Activated naive CD8-positive, alpha-beta T cell treated with anti-CD3 and anti-CD28 coated beads, Interleukin-2, amount 10 ng/mL, durations not matched to agents 7 days and 5 days (primary cell): ENCODE measurements at regions of chr1 and their contacts with region 1.

Region 1: GRCh38 chr1:161132410-161133219 is at the start of gene DEDD:
- DNase-seq: peak; percentile 92
- ATAC-seq: peak; percentile 98
- H3K4me3 Mint-ChIP-seq: no peak within 1 kb of the TSS
- H3K27ac Mint-ChIP-seq: no peak within 1 kb of the TSS
- H3K4me1 Mint-ChIP-seq: peaks cover 35% of the 10 kb centered on the region
- H3K27me3 Mint-ChIP-seq: no peaks in the 10 kb centered on the region
- total RNA-seq, gene DEDD: 39.8 to 40.3 TPM

Region 2: DNA sequence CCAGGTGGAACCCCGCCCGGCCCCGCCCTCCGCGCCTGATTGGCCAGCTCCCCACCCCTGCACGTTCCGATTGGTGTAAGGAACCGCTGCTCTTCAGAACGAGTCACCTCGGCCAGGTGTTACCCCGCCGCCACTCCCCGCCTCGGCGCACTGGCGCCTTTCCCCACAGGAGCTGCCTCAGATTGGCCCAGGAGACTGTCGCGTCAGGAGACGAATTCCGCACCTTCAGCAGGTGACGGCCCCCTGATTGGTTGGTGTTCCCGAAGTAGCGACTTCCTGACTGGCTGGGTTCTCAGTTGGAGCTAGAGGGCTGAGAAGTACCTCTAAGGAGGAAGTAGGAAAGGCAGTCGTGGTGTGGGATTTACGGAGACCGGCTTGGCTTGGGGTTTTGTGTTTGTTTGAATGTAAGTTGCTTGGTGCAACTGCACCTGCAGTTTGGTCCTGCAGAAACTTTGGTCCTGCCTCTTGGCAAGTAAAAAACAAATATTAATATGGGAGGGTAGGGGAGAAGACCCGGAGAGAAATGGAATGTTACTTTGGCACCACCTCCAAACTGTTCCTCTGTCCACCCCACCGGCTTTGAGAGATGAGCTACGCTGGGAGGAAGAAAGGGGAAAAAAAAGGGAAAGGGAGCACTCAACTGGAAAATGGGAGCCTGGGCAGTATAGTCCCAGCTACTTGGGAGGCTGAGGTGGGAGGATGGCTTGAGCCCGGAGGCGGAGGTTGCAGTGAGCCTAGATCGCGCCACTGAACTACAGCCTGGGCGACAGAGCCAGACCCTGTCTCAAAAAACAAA is 111.3 kb before region 1 on chr1:
- POLR2A ChIA-PET with region 1: interaction called, 10 read pairs
- DNase-seq: peak; percentile 84
- ATAC-seq: peak; percentile 95
- H3K4me3 Mint-ChIP-seq: peak overlapping the region; percentile 97
- H3K27ac Mint-ChIP-seq: peak overlapping the region; percentile 79
- H3K4me1 Mint-ChIP-seq: peaks cover 29% of the 10 kb centered on the region
- H3K27me3 Mint-ChIP-seq: no peaks in the 10 kb centered on the region

Region 3: DNA sequence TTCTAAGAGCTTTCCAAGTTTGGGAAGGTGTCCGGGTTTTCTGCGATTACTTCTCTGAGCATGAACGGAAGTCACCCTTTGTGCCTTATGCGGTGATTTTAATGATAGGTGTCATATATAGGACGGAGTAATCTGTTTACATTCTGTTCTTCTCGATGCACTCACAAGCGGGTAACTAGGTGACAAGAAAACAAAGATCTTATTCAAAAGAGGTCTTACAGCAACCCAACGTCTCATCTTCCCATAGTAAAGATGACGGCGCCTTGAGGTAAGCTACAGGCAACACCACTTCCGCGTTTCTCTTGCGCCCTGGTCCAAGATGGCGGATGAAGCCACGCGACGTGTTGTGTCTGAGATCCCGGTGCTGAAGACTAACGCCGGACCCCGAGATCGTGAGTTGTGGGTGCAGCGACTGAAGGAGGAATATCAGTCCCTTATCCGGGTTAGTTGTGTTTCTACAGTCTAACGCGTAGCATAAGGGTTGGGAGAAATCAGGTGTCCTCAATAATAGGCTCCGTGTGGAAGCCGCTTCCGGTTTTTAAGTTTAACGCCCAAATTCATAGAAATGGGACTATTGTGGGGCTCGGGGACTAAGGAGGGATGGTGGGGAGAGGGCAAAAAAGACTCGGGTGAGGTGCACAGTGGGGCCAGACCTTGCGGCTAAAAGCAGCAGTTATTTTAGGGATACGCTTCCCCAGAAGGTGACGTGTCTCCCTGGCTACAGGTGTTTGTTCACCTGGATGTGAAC is 21.2 kb after region 1 on chr1 and contains the start of gene UFC1:
- POLR2A ChIA-PET with region 1: interaction called, 13 read pairs
- DNase-seq: peak; percentile 80
- ATAC-seq: peak; percentile 95
- H3K4me3 Mint-ChIP-seq: peak within 1 kb of the TSS; percentile 99
- H3K27ac Mint-ChIP-seq: peak within 1 kb of the TSS; percentile 100
- H3K4me1 Mint-ChIP-seq: peaks cover 20% of the 10 kb centered on the region
- H3K27me3 Mint-ChIP-seq: no peaks in the 10 kb centered on the region
- total RNA-seq, gene UFC1: 95.9 to 98.1 TPM